GM12878 (cell line): ENCODE measurements at regions of chr3 and their contacts with region 1.

Region 1: DNA sequence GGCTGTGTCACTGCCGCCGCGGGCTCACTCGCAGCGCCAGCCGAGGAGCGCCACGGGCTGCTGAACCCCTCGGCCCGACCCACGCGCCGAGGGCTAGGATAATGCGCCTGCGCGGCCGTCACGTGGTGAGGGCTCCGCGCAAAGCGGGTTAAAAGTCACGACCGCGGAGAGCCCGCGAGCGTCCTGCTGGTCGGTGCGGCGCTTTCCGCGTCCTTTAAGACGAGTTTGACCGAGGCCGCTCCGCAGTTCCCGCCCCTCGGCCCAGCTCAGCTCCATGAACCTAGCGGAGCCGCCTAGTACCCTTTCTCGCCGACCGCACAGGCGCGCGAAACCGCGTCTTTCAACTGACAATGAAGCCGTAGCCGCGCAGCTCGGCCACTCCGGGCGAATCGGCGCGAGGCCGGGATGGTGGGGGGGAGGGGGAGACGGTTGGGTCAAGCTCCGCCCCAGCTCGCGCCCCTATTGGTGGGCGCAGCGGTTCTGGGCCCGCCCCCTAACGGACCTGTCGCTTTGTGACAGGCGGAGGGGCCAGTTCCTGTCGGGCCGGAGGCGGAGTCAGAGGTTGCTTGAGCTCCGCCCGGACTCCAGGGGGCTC is 636 bp upstream of the STT3B start:
- DNase-seq: peak; percentile 86
- ATAC-seq: peak; percentile 91
- H3K4me3 ChIP-seq: peak overlapping the region; percentile 92
- H3K27ac ChIP-seq: peak overlapping the region; percentile 92
- H3K4me1 ChIP-seq: peaks cover 6% of the 10 kb centered on the region; the same call in 1 of the 2 replicates
- H3K27me3 ChIP-seq: no peaks in the 10 kb centered on the region
- CTCF ChIP-seq: no peak
- EP300 ChIP-seq: peak; percentile 13 to 30; a peak in 1 of 4 replicates
- POLR2A ChIP-seq: peak; percentile 95
- RAD21 ChIP-seq: no peak

Region 2: DNA sequence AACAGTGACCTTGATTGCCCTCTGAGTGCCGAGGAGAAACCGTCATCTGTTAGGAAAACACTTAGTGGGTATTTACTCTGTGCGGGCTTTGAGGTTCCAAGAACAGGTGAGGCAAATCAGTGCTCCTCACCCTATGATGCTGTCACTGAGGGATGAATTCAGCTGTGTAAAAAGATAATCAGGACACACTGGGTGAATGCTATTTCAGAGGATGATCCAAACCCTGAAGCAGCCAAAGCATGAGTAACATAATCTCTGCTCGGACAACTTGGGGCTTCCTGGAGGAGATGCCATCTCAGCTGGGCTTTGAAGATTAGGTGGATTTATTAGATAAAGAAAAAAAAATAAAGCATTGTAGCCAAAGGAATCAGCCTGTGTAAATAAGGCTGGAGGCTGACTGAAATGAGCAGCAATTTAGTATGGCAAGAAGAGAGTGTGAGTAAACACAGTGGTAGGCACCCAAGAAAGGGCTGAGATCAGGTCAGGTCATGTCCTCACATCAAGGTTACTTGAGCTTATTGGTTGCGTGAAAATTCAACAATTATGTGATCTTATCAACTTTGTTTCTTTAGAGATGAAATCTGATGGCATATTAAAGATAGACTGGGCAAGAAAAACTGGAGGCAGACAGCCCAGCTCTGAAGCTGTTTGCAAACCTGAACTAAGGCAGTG is 627.0 kb before region 1 on chr3:
- CTCF ChIA-PET with region 1: no interaction called
- POLR2A ChIA-PET with region 1: no interaction called
- RAD21 ChIA-PET with region 1: no interaction called
- SMC1A ChIA-PET with region 1: no interaction called
- in situ Hi-C with region 1: no loop called
- intact Hi-C with region 1: no loop called
- DNase-seq: no peak
- ATAC-seq: no peak
- H3K4me3 ChIP-seq: no peak overlapping the region
- H3K27ac ChIP-seq: no peak overlapping the region
- H3K4me1 ChIP-seq: no peaks in the 10 kb centered on the region
- H3K27me3 ChIP-seq: no peaks in the 10 kb centered on the region; a peak in 1 of 4 replicates
- CTCF ChIP-seq: no peak
- EP300 ChIP-seq: no peak
- POLR2A ChIP-seq: no peak
- RAD21 ChIP-seq: no peak

Region 3: GRCh38 chr3:31227131-31227562 is 304.9 kb before region 1 on chr3:
- CTCF ChIA-PET with region 1: interaction called, 3 read pairs
- POLR2A ChIA-PET with region 1: interaction called, 13 read pairs
- RAD21 ChIA-PET with region 1: interaction called, 18 read pairs
- SMC1A ChIA-PET with region 1: interaction called, 18 read pairs
- in situ Hi-C with region 1: no loop called
- intact Hi-C with region 1: no loop called
- DNase-seq: peak; percentile 80
- ATAC-seq: peak; percentile 80
- H3K4me3 ChIP-seq: no peak overlapping the region
- H3K27ac ChIP-seq: peak overlapping the region; percentile 44
- H3K4me1 ChIP-seq: peaks cover 45% of the 10 kb centered on the region
- H3K27me3 ChIP-seq: no peaks in the 10 kb centered on the region
- CTCF ChIP-seq: no peak
- EP300 ChIP-seq: peak in 1 of 2 experiments; percentile 75; a peak in 2 of 4 replicates
- POLR2A ChIP-seq: no peak
- RAD21 ChIP-seq: no peak

Region 4: DNA sequence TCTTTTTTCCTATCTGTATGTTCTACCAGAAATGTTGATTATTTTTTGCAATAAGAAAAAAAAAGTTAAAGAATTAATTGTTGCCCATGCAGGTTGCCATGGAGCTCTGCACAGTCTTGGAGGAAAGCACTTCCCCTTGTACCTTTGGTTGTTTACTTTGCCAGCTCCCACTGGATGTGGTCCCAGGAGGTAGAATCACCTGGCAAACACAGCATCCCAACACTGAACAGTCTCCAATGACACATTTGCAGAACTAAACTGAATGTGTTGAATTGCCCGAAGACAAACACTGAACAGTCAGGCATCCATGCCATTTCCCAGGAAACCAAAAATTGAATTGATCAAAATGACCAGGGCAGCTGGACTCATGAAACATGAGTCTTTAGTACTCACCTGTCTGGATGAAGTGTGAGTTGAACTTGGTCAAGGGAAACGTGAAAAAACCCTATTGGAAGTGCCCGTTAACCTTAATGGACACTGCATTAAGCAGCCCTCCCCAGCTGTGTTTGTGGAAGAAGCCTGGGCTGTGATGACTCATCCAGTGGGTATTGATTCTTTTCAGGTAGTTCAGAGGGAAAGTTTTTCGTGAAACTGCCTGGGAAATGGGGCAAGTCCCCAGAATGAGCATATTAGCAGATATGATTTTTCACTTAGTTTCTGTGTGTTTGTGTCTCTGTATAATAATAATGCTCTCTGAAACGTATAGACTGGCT is 284.1 kb before region 1 on chr3:
- CTCF ChIA-PET with region 1: interaction called, 3 read pairs
- POLR2A ChIA-PET with region 1: interaction called, 69 read pairs
- RAD21 ChIA-PET with region 1: interaction called, 88 read pairs
- SMC1A ChIA-PET with region 1: interaction called, 56 read pairs
- in situ Hi-C with region 1: loop called (anchors 10 kb)
- intact Hi-C with region 1: loop called (anchors 1 kb)
- DNase-seq: peak; percentile 77
- ATAC-seq: peak; percentile 60
- H3K4me3 ChIP-seq: peak overlapping the region; percentile 47; the same call in 1 of the 2 replicates
- H3K27ac ChIP-seq: peak overlapping the region; percentile 86
- H3K4me1 ChIP-seq: peaks cover 40% of the 10 kb centered on the region
- H3K27me3 ChIP-seq: no peaks in the 10 kb centered on the region
- CTCF ChIP-seq: no peak
- EP300 ChIP-seq: peak in 1 of 2 experiments; percentile 74; a peak in 1 of 4 replicates
- POLR2A ChIP-seq: no peak
- RAD21 ChIP-seq: no peak

Region 5: GRCh38 chr3:31462050-31462569 is 70.0 kb before region 1 on chr3:
- CTCF ChIA-PET with region 1: interaction called, 3 read pairs
- POLR2A ChIA-PET with region 1: interaction called, 14 read pairs
- RAD21 ChIA-PET with region 1: interaction called, 46 read pairs
- SMC1A ChIA-PET with region 1: interaction called, 35 read pairs
- in situ Hi-C with region 1: no loop called
- intact Hi-C with region 1: loop called (anchors 5 kb)
- DNase-seq: peak; percentile 64
- ATAC-seq: peak; percentile 97
- H3K4me3 ChIP-seq: peak overlapping the region; percentile 7; the same call in 1 of the 2 replicates
- H3K27ac ChIP-seq: peak overlapping the region; percentile 9
- H3K4me1 ChIP-seq: peaks cover 13% of the 10 kb centered on the region
- H3K27me3 ChIP-seq: no peaks in the 10 kb centered on the region
- CTCF ChIP-seq: peak; percentile 4 to 40 (median 37); a peak in 3 of 6 replicates
- EP300 ChIP-seq: 0 out of 4 replicates have a peak, but pooled peaks have one; percentile 23 to 33
- POLR2A ChIP-seq: no peak
- RAD21 ChIP-seq: peak; percentile 35

Region 6: DNA sequence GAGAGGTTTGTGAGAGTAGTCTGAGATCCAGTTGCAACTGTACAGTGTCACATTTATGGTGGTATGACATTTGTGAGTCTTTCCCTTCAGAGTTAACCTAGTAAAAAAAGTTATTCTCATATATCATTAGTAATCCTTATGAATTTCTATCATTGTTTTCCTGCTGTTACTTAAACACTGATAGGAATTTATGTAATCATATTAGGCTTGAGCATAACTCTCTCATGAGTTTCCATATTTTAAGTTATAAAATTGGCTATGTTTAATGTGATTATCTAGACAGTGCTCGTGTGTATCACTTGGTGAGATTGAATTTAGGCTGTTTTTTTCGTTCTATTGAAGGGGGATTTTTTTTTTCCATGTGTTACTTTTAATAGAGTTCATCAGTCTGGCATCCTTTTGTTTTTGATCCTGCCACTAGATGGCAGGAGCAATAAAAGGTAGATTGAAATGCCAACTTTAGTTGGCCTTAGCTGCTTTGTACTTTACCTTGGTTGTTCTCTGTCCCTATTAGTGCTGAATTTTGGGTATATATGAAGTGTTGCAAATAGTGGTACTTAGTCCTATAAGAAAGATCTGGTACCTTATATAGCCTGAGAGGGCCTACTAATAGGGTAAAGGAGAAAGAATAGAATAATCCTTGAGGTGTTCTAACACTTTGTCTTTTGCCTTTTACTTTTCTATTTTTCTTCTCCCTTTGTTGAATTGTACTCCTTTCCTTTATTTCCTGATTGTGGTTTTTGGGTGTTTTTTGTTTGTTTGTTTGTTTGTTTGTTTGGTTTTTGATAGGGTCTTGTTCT is 18.6 kb after region 1 on chr3:
- CTCF ChIA-PET with region 1: interaction called, 15 read pairs
- POLR2A ChIA-PET with region 1: interaction called, 15 read pairs
- RAD21 ChIA-PET with region 1: interaction called, 26 read pairs
- SMC1A ChIA-PET with region 1: interaction called, 24 read pairs
- in situ Hi-C with region 1: no loop called
- intact Hi-C with region 1: no loop called
- DNase-seq: no peak
- ATAC-seq: peak; percentile 71
- H3K4me3 ChIP-seq: no peak overlapping the region
- H3K27ac ChIP-seq: no peak overlapping the region
- H3K4me1 ChIP-seq: no peaks in the 10 kb centered on the region
- H3K27me3 ChIP-seq: no peaks in the 10 kb centered on the region
- CTCF ChIP-seq: peak; percentile 48 to 62 (median 49); a peak in 5 of 6 replicates
- EP300 ChIP-seq: no peak
- POLR2A ChIP-seq: no peak
- RAD21 ChIP-seq: peak; percentile 51

Region 7: DNA sequence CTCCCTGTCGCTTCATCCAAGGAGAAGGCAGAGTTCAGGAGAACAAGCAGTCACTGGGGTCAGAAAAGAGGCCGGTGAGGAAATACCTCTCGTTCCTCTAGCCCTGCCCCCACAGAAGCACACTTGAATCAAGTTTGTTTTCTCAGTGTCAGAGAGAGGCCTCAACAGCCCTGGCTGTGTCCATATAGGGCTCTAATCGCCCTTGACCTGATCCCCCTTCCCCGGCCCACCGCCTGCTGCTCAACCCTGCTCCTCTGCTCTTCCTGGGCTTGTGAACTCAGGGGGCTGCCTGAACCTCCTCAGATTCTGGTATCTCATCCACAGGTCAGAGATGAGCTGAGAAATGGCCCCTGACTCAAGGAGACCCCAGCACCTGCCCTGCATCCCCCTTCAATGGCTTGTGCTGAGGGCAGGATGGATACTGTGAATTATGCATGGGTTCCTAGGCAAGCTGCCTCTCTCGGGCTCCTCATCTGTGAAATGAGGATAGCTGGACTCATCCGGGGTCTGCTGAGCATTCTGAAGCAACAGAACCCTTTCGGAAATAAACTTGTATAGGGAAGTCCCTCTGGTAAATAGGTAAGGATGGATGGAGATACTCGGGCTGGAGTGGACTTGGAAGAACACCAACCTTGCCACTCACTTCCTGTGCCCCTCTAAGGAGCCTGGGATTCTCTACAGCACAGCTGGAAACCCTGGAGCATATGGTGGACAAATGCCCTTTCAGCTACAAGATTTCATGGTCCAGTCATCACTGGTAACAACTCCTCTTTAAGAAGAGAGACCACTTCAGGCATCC is 148.2 kb after region 1 on chr3:
- CTCF ChIA-PET with region 1: no interaction called
- POLR2A ChIA-PET with region 1: no interaction called
- RAD21 ChIA-PET with region 1: no interaction called
- SMC1A ChIA-PET with region 1: no interaction called
- in situ Hi-C with region 1: no loop called
- intact Hi-C with region 1: no loop called
- DNase-seq: no peak
- ATAC-seq: no peak
- H3K4me3 ChIP-seq: no peak overlapping the region
- H3K27ac ChIP-seq: no peak overlapping the region
- H3K4me1 ChIP-seq: no peaks in the 10 kb centered on the region
- H3K27me3 ChIP-seq: no peaks in the 10 kb centered on the region
- CTCF ChIP-seq: no peak
- EP300 ChIP-seq: no peak
- POLR2A ChIP-seq: no peak
- RAD21 ChIP-seq: no peak